Calu3 (cell line): ENCODE measurements at regions of chr2 and their contacts with region 1.

Region 1: DNA sequence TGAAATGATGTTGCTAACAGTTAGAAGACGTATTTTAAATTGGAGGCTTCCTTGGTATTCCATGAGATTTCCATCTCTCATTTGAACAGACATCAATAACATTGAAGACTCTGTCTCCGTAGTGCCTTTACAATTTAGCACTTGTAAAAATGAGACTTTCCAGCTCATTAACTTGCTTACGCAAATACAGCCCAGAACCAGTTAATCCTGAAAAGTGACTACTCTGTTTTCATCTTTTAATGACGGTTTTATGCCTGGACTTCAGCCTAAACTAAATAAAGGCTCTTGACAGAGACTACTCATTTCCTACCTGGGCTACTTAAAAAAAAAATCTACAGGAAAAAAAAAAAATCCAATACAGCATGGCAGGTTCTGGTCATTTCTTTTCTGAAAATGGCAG is 148.6 kb downstream of the LRATD1 start:
- DNase-seq: no peak
- H3K4me3 Mint-ChIP-seq: no peak overlapping the region
- H3K27ac Mint-ChIP-seq: no peak overlapping the region
- H3K4me1 Mint-ChIP-seq: peaks cover 33% of the 10 kb centered on the region
- H3K27me3 Mint-ChIP-seq: no peaks in the 10 kb centered on the region
- CTCF ChIP-seq: no peak

Region 2: DNA sequence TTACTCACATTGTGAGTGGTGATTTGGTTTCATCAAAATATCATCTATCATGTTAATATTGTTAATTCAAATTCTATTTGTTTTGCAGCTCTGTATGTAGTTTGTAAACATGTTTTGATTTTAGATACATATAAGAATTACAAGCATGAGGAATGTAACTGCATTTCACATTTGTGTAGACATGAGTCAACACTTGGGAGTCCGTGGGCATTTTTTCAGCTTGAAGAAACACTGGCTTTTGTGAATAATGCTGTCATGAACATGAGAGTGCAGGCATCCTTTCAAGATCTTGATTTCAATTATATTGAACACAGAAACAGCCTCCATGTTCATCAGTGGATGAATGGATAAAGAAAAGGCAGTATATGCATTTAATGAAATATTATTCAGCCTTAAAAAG is 46.1 kb after region 1 on chr2:
- CTCF ChIA-PET with region 1: no interaction called
- intact Hi-C with region 1: loop called (anchors 5 kb)
- DNase-seq: no peak
- H3K4me3 Mint-ChIP-seq: no peak overlapping the region
- H3K27ac Mint-ChIP-seq: peak overlapping the region; percentile 2
- H3K4me1 Mint-ChIP-seq: peaks cover 7% of the 10 kb centered on the region
- H3K27me3 Mint-ChIP-seq: no peaks in the 10 kb centered on the region
- CTCF ChIP-seq: no peak